ENCODE measurements at regions of chr10 and their contacts with region 1.

Region 1: GRCh38 chr10:58384999-58385783 is at the start of gene TFAM:
- DNase-seq: peak; percentile 95 to 98 (median 96)
- ATAC-seq: peak; percentile 98 to 99 (median 99)
- H3K4me3 ChIP-seq: peak within 1 kb of the TSS; percentile 54 to 96 (median 84)
- H3K27ac ChIP-seq: peak within 1 kb of the TSS; percentile 89 to 98 (median 91)
- H3K4me1 ChIP-seq: peaks cover 0 to 29% (median 18%) of the 10 kb centered on the region in 12 donors
- H3K27me3 ChIP-seq: no peaks in the 10 kb centered on the region
- CTCF ChIP-seq: peak in 9 of 12 donors; percentile 3 to 75 (median 63)
- POLR2A ChIP-seq: peak in 1 of 2 donors; percentile 80
- total RNA-seq, gene TFAM: 13.0 to 33.8 (median 21.2) TPM

Region 2: GRCh38 chr10:58177362-58177947 is 207.7 kb before region 1 on chr10:
- intact Hi-C with region 1: loop called in 3 of 10 experiments (anchors 10 kb)
- DNase-seq: no peak
- ATAC-seq: no peak
- H3K4me3 ChIP-seq: no peak overlapping the region
- H3K27ac ChIP-seq: no peak overlapping the region
- H3K4me1 ChIP-seq: no peaks in the 10 kb centered on the region
- H3K27me3 ChIP-seq: no peaks in the 10 kb centered on the region
- CTCF ChIP-seq: peak; percentile 40 to 79 (median 68)
- POLR2A ChIP-seq: no peak

Region 3: GRCh38 chr10:58268870-58269605 is 116.2 kb before region 1 on chr10 and contains the start of gene CISD1:
- intact Hi-C with region 1: loop called in 1 of 10 experiments (anchors 10 kb)
- DNase-seq: peak; percentile 96 to 98 (median 97)
- ATAC-seq: peak; percentile 90 to 96 (median 94)
- H3K4me3 ChIP-seq: peak within 1 kb of the TSS; percentile 49 to 89 (median 80)
- H3K27ac ChIP-seq: peak within 1 kb of the TSS; percentile 73 to 96 (median 94)
- H3K4me1 ChIP-seq: peaks cover 0 to 38% (median 21%) of the 10 kb centered on the region in 12 donors
- H3K27me3 ChIP-seq: no peaks in the 10 kb centered on the region
- CTCF ChIP-seq: no peak
- POLR2A ChIP-seq: peak in 1 of 2 donors; percentile 75
- total RNA-seq, gene CISD1: 73.9 to 179 (median 155) TPM

Region 4: DNA sequence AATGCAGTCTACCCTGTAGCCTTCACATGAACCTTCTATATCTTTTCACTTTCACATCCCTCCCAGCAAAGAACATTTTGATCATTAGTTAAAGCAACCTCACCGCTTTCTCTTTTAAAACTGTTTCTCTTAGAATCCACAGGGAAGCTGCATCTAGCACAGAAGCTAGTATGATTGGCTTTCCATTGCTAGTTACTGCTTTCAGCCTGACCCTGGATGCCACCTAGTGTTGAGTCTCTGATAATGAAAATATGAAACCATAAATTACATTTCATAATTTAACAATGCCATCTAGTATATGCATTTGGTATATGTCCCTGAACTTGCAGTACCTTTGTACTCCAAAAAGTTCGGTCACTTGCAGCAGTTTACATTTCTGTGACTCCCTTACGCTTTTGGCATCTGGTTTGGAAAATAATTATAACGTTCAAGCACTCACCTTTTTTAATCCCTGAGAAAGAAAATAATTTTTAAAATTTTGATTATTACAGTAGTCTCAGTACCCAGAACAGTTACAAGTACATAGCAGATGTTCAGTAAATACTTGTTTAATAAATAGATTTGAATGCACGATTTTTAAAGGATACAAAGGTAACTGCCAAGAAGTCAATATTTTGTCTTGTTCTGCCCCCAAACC is 93.5 kb before region 1 on chr10:
- intact Hi-C with region 1: loop called in 2 of 10 experiments (anchors 5 kb)
- DNase-seq: peak in 1 of 5 donors; percentile 24
- ATAC-seq: peak; percentile 37 to 75 (median 70)
- H3K4me3 ChIP-seq: no peak overlapping the region
- H3K27ac ChIP-seq: no peak overlapping the region
- H3K4me1 ChIP-seq: no peaks in the 10 kb centered on the region
- H3K27me3 ChIP-seq: no peaks in the 10 kb centered on the region
- CTCF ChIP-seq: peak; percentile 60 to 83 (median 71)
- POLR2A ChIP-seq: no peak

Region 5: DNA sequence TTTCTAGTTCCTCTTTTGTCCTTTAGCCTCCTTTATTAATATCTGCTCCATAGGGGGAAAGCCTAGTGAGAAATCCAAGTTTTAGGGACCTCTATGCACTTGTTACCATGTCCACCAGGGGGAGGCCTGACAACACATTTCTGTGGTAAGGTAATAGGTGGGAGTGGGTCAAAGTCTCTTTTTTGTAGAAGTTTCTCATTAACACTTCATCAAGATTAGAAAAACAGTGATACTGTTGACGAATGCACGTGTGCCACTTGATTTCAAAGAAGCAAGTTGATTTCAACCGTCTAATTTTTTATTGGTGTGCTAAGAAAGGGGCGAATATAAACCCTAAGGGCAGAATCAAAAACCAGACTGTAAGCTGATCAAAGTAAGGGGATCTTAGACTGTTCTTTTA is 85.6 kb before region 1 on chr10:
- intact Hi-C with region 1: loop called in 3 of 10 experiments (anchors 5 to 10 kb)
- DNase-seq: peak in 4 of 5 donors; percentile 34 to 53 (median 42)
- ATAC-seq: peak in 3 of 4 donors; percentile 65 to 71 (median 69)
- H3K4me3 ChIP-seq: no peak overlapping the region
- H3K27ac ChIP-seq: no peak overlapping the region
- H3K4me1 ChIP-seq: peaks cover 0 to 3% (median 0%) of the 10 kb centered on the region in 12 donors
- H3K27me3 ChIP-seq: peaks cover 0 to 3% (median 0%) of the 10 kb centered on the region in 9 donors
- CTCF ChIP-seq: peak; percentile 61 to 87 (median 77)
- POLR2A ChIP-seq: no peak

Region 6: DNA sequence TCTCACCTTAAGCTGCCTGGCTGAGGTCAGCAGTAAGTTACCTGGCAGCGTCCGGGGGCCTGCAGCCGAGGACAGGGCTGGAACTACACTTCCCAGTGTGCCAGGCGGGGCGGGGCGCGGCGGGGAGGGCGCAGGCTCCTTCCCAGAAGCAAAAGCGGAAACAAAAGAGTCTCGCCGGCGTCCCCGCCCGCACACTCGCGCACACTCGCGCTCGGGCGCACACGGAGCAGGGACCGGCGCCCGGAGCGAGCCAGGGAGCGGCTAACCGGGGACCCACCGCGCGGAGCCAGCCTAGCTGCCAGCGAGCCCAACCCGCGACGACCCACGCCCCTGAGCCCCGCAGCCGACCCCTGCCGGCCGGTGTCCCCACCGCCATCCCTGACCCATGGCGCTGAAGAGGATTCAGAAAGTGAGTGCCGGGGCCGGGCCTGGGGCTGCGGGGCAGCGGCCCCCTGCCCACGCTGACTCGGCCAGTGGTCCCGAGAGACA is 50.3 kb before region 1 on chr10 and contains the start of gene UBE2D1:
- intact Hi-C with region 1: loop called in 9 of 10 experiments (anchors 1 to 10 kb)
- DNase-seq: peak; percentile 90 to 95 (median 93)
- ATAC-seq: peak; percentile 86 to 98 (median 96)
- H3K4me3 ChIP-seq: peak within 1 kb of the TSS; percentile 76 to 97 (median 90)
- H3K27ac ChIP-seq: peak within 1 kb of the TSS; percentile 83 to 97 (median 92)
- H3K4me1 ChIP-seq: peaks cover 0 to 44% (median 13%) of the 10 kb centered on the region in 12 donors
- H3K27me3 ChIP-seq: no peaks in the 10 kb centered on the region
- CTCF ChIP-seq: peak in 5 of 12 donors; percentile 16 to 30 (median 21)
- POLR2A ChIP-seq: peak; percentile 46 to 95
- total RNA-seq, gene UBE2D1: 30.8 to 84.2 (median 51.1) TPM

Region 7: GRCh38 chr10:58543141-58543540 is 157.9 kb after region 1 on chr10:
- intact Hi-C with region 1: no loop called
- DNase-seq: no peak
- ATAC-seq: no peak
- H3K4me3 ChIP-seq: no peak overlapping the region
- H3K27ac ChIP-seq: no peak overlapping the region
- H3K4me1 ChIP-seq: peaks cover 0 to 23% (median 0%) of the 10 kb centered on the region in 12 donors
- H3K27me3 ChIP-seq: no peaks in the 10 kb centered on the region
- CTCF ChIP-seq: no peak
- POLR2A ChIP-seq: no peak

Measured in heart left ventricle (tissue), 16 donors.